Activated naive CD4-positive, alpha-beta T cell treated with anti-CD3 and anti-CD28 coated beads for 36 hours (primary cell): ENCODE measurements at regions of chr5 and their contacts with region 1.

Region 1: GRCh38 chr5:53425598-53426511 is 54.6 kb upstream of the FST start:
- DNase-seq: peak; percentile 59
- H3K4me3 Mint-ChIP-seq: no peak overlapping the region
- H3K27ac Mint-ChIP-seq: no peak overlapping the region
- H3K4me1 Mint-ChIP-seq: no peaks in the 10 kb centered on the region
- H3K27me3 Mint-ChIP-seq: peaks cover 20% of the 10 kb centered on the region

Region 2: GRCh38 chr5:53170748-53171349 is 255.0 kb before region 1 on chr5:
- CTCF ChIA-PET with region 1: no interaction called
- intact Hi-C with region 1: loop called (anchors 10 kb)
- DNase-seq: peak; percentile 25
- H3K4me3 Mint-ChIP-seq: no peak overlapping the region
- H3K27ac Mint-ChIP-seq: no peak overlapping the region
- H3K4me1 Mint-ChIP-seq: no peaks in the 10 kb centered on the region
- H3K27me3 Mint-ChIP-seq: peaks cover 3% of the 10 kb centered on the region